Endothelial cell of umbilical vein (primary cell): ENCODE measurements at regions of chr2 and their contacts with region 1.

Region 1: DNA sequence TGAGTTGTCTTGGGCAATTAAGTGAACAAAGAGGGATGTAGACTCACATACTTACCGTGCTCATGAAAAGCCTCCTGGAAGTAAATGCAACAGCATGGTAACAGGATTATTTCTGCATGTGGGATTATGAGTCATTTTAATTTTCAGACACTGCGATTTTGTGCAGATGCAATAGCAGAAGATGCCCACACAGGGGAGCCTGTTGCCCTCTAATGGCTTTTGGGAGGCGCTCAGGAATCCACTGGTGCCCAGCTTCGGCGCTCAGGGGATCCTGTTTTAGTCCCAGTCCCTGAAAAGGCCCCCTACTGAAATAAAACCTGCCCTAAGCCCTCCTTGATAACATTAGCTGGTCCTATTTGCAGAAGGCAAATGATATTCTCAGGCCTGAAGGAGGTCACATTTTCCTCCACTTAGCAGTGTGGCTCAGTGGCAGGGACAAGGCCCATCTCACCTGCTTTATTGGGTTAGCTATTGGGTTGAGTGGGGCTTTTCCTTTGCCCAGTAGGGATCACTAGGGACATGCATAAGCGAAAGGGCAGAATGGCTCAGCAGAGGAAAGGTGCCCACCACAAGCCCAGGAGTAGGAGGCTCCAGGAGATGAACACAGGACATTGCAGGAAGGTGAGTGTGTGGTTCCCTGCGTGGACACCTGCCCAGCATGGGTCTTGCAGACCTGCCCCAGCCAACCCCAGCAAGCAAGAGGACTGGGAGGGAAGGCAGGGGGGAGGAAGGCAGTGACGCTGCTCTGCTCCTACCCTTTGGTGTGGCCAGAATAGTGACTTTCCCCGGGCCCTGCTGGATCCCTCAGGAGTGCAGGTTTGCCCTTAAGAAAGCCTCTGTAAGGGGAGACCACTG is 26.5 kb upstream of the KCNS3 start:
- DNase-seq: peak; percentile 51
- H3K4me3 ChIP-seq: no peak overlapping the region
- H3K27ac ChIP-seq: no peak overlapping the region
- H3K4me1 ChIP-seq: no peaks in the 10 kb centered on the region
- H3K27me3 ChIP-seq: no peaks in the 10 kb centered on the region
- CTCF ChIP-seq: peak; percentile 72 to 79
- POLR2A ChIP-seq: no peak

Region 2: DNA sequence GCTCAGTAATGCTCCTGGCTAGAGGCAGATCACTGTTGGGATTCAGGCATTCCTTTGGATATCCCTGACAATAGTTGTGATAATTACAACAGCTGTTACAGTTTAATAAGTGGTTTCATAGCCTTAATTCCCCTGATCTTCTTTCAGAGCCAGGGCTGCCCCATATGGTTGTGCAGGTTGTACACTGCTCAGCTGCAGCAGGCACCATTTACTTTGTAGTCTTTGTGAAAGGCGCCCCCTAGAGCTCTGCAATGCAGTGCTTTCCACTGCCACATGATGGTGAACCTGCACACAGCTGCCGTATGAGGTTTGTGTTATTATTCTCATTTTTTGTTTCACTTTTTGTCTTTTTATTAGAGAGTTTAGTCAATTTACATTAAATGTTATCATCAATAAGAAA is 265.6 kb after region 1 on chr2:
- CTCF ChIA-PET with region 1: no interaction called
- POLR2A ChIA-PET with region 1: no interaction called
- dilution Hi-C with region 1: no loop called
- intact Hi-C with region 1: loop called (anchors 5 kb)
- DNase-seq: peak; percentile 26
- H3K4me3 ChIP-seq: no peak overlapping the region
- H3K27ac ChIP-seq: no peak overlapping the region
- H3K4me1 ChIP-seq: no peaks in the 10 kb centered on the region
- H3K27me3 ChIP-seq: no peaks in the 10 kb centered on the region
- CTCF ChIP-seq: peak; percentile 50 to 54
- POLR2A ChIP-seq: no peak

Region 3: DNA sequence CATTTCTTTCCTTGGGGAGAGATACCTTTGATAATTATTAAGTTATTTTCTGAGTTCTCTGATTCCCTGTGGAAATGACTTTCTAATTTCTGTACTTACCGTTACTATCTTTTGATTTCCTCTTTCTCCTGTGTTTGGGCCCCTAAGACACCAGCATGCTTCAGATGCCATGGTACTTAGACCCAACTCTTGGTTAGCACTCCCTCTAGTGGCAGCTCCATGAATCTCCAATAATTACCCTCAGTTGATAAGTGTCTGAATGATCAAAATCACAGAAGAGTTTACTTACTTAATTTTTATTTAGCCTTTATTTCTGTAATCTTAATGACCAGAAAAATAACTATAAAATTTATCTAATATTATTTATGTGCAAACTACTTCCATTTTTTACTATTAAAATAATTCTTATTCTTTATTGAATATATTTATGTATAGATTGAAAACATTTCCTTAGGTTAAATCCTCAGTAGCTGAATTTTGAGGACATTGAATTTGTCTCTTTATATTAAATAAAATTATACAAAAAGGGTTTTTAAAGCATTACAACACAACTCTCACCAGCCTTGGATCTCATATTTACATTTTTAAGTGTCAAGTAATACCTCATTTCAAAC is 326.9 kb after region 1 on chr2:
- CTCF ChIA-PET with region 1: interaction called, 14 read pairs
- POLR2A ChIA-PET with region 1: no interaction called
- dilution Hi-C with region 1: no loop called
- intact Hi-C with region 1: loop called (anchors 1 kb)
- DNase-seq: peak; percentile 65
- H3K4me3 ChIP-seq: no peak overlapping the region
- H3K27ac ChIP-seq: no peak overlapping the region
- H3K4me1 ChIP-seq: no peaks in the 10 kb centered on the region
- H3K27me3 ChIP-seq: peaks cover 0 to 2% of the 10 kb centered on the region in 2 experiments
- CTCF ChIP-seq: peak; percentile 62 to 67
- POLR2A ChIP-seq: no peak